Common myeloid progenitor, CD34-positive (primary cell): ENCODE measurements at regions of chr17 and their contacts with region 1.

Region 1: GRCh38 chr17:74937064-74938051 is 1.7 kb downstream of the OTOP3 start:
- DNase-seq: no peak
- H3K4me3 ChIP-seq: no peak overlapping the region
- H3K27ac ChIP-seq: no peak overlapping the region
- H3K4me1 ChIP-seq: peaks cover 0 to 9% (median 4%) of the 10 kb centered on the region in 4 experiments
- H3K27me3 ChIP-seq: peaks cover 2 to 70% (median 34%) of the 10 kb centered on the region in 5 experiments

Region 2: GRCh38 chr17:74677558-74678466 is 259.5 kb before region 1 on chr17:
- CTCF ChIA-PET with region 1: no interaction called
- POLR2A ChIA-PET with region 1: no interaction called
- DNase-seq: peak in 2 of 3 donors; percentile 11 to 15
- H3K4me3 ChIP-seq: peak overlapping the region in 2 of 7 experiments; percentile 3 to 35
- H3K27ac ChIP-seq: no peak overlapping the region
- H3K4me1 ChIP-seq: peaks cover 0 to 16% (median 16%) of the 10 kb centered on the region in 4 experiments
- H3K27me3 ChIP-seq: no peaks in the 10 kb centered on the region

Region 3: DNA sequence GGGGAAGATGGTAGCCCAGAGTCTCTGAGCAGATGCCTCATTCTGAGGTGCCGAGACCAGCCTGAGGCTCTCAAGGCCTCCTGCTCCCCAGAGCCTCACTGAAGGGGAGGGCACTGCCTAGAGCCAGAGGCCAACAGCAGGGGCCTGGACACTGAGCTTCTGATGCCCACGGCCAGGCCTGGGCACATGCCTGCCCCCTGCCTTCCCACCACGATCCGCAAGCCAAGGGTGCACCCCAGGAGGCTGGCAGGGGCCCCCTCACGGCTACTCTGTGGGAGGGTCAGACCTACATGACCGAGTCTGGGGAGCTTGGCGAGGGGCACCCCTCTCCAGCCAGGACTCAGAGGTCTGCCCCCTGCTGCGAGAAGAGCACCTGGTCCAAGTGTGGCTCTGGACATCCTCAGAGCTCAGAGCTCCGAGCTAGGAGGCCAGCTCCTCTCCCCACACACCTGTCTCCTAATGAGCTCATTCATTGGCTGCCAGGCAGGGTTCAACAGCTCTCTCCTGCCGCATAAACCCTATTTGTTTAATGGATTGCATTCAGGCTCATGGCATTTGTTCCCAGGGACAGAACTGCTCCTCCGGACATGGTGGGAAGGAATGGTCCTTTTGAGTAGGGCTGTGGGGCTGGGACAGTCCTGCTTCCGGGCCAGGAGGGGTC is 12.2 kb after region 1 on chr17:
- CTCF ChIA-PET with region 1: interaction called, 10 read pairs
- POLR2A ChIA-PET with region 1: no interaction called
- DNase-seq: no peak
- H3K4me3 ChIP-seq: no peak overlapping the region
- H3K27ac ChIP-seq: no peak overlapping the region
- H3K4me1 ChIP-seq: no peaks in the 10 kb centered on the region
- H3K27me3 ChIP-seq: peaks cover 0 to 7% (median 6%) of the 10 kb centered on the region in 5 experiments